ENCODE measurements at regions of chr7 and their contacts with region 1.

Region 1: DNA sequence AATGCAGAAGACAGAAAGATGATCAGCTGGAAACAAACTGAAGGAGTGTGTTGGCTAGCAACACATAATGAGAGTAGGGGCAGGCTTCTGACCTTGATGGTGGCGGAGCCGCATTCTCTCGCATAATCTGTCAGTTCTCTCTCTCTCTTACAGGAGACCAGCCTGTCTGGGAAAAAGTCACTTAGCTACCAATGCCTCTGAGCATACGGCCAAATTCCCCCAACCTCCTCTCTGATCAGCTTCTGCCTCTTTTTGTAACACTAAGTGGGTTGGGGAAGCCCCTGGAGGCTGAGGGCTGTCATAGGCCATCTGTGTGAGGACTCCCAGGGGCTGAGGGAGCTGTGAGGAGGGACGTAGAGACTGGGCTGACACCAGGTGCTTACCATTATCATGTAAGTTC is 104.6 kb downstream of the HIPK2 start:
- DNase-seq: peak; percentile 81
- H3K4me3 Mint-ChIP-seq: peak overlapping the region; percentile 35
- H3K27ac Mint-ChIP-seq: peak overlapping the region; percentile 85
- H3K4me1 Mint-ChIP-seq: peaks cover 28% of the 10 kb centered on the region
- H3K27me3 Mint-ChIP-seq: no peaks in the 10 kb centered on the region

Region 2: GRCh38 chr7:139696552-139696951 is 23.3 kb after region 1 on chr7:
- CTCF ChIA-PET with region 1: no interaction called
- intact Hi-C with region 1: loop called (anchors 1 kb)
- DNase-seq: peak; percentile 78
- H3K4me3 Mint-ChIP-seq: no peak overlapping the region
- H3K27ac Mint-ChIP-seq: peak overlapping the region; percentile 81
- H3K4me1 Mint-ChIP-seq: peaks cover 30% of the 10 kb centered on the region
- H3K27me3 Mint-ChIP-seq: no peaks in the 10 kb centered on the region

Region 3: DNA sequence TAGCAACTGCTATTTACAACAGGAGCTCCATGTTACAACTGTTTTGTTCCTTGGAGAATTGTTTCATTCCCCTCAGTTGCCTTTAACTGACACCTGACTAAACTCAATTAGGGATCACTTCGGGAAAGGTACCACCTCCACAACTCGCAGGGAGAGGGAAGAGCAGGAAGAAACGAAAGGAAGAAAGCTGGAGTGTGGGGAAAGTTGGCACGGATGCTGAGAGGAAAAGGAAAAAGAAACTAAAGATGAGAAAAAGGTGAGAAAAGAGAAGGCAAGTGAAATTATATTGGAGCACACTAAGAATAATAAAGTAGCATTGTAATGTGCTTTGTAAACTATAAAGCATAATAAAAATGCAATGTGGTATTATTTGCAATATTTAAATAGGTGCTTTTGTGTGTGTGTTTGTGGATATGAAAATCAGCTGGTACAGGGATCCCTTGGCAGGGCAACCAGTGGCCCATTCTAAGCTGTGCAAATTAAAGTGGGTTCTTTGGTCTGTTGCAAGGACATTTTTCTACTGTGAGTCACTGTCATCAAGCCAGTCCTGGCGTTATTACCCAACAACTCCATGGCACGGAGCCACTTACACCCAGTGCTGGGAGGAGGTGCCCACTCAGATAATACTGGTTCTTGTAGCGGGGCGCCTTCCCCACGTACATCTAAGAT is 58.7 kb after region 1 on chr7:
- CTCF ChIA-PET with region 1: no interaction called
- intact Hi-C with region 1: loop called (anchors 2 kb)
- DNase-seq: no peak
- H3K4me3 Mint-ChIP-seq: no peak overlapping the region
- H3K27ac Mint-ChIP-seq: no peak overlapping the region
- H3K4me1 Mint-ChIP-seq: peaks cover 52% of the 10 kb centered on the region
- H3K27me3 Mint-ChIP-seq: no peaks in the 10 kb centered on the region

Region 4: DNA sequence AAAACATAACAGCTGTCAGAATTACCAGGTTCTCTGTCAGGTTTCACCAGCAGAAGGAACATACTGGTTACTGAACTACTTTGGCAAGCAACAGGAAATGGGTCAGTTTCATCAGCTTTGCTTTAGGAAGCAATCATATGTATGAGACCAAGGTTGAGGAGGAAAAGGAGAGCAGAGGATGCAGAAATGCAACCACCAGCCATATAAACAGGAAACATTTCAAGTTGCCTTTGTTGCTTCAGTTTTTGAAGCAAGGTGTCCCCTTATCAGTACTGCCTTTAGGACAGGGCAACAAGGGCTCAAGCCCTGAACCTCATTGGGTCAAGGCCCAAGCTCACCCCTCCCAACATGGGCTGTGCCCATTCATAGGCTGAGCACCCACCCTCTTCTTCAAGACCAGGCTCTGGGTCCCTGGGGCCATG is 94.3 kb after region 1 on chr7:
- CTCF ChIA-PET with region 1: interaction called, 3 read pairs
- intact Hi-C with region 1: loop called (anchors 1 kb)
- DNase-seq: peak; percentile 38
- H3K4me3 Mint-ChIP-seq: no peak overlapping the region
- H3K27ac Mint-ChIP-seq: peak overlapping the region; percentile 73
- H3K4me1 Mint-ChIP-seq: peaks cover 76% of the 10 kb centered on the region
- H3K27me3 Mint-ChIP-seq: no peaks in the 10 kb centered on the region

Region 5: DNA sequence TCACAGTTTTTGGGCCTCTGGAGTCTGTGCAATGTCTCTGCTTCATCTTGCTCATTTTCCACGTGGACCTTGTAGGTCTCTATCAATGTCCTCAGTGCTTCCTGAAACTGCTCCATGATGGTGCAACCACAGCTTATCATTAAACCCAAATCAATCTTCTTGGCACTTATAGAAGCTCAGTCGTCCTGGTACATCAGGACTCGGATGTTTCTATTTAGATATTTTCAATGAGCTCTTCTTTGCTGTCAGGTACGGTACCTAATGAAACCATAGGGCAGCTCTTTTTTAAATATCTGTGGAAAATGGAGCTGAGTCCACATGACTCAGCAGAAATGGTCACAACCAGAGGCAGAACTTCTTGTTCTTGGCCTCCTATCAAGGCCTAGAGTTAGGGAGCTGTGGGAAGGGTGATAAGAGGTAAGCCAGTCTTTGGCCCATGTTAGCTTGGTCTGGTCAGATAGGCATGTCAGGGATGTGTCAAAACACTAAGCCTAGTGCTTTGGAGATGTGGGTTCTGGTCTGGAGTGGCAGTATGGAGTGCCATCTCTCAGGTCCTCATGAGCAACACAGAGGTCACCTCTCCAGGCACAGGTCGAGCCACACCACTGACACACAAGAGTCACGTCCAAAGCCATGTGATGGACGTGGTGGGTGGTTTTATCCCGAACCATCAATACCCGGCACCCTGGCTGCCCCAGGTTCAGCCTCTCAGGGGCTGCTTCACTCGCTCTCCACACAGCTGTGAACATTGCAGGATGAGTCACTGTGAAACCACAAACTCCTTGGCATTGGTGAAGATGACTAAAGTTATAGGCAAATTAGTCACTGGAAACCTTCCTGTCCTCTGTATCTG is 242.9 kb after region 1 on chr7:
- CTCF ChIA-PET with region 1: no interaction called
- intact Hi-C with region 1: loop called (anchors 2 kb)
- DNase-seq: peak; percentile 87
- H3K4me3 Mint-ChIP-seq: no peak overlapping the region
- H3K27ac Mint-ChIP-seq: peak overlapping the region; percentile 19
- H3K4me1 Mint-ChIP-seq: peaks cover 24% of the 10 kb centered on the region
- H3K27me3 Mint-ChIP-seq: peaks cover 2% of the 10 kb centered on the region

Measured in activated naive CD4-positive, alpha-beta T cell treated with anti-CD3 and anti-CD28 coated beads for 36 hours (primary cell).